Activated CD4-positive, alpha-beta memory T cell treated with anti-CD3 and anti-CD28 coated beads for 36 hours (primary cell): ENCODE measurements at regions of chr18 and their contacts with region 1.

Region 1: DNA sequence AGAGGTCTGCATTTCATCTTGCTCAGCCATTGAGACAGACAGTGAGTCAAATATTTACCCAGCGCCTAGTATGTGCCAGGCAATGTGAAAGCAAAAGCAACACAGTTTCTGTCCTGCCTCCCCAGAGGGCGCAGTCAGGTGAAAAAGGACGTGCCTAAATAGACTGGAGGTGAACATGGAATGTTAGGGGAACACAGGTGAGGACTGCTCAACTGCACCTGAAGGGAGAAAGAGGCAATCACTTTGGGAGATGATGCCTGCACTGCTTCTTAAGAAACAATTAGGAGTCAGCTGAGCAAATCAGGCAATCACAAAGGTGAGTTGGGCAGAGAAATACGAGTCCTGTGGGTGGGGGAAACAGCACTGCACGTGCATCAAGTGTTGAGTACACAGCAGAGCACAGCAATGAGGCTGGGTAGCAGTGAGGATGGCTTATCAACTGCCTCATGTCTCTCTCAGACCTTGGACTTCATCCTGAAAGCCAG is 218.3 kb upstream of the SMAD7 start:
- DNase-seq: peak; percentile 58
- H3K4me3 Mint-ChIP-seq: peak overlapping the region; percentile 36
- H3K27ac Mint-ChIP-seq: no peak overlapping the region
- H3K4me1 Mint-ChIP-seq: peaks cover 34% of the 10 kb centered on the region
- H3K27me3 Mint-ChIP-seq: no peaks in the 10 kb centered on the region

Region 2: GRCh38 chr18:48934723-48935432 is 234.2 kb before region 1 on chr18:
- CTCF ChIA-PET with region 1: no interaction called
- POLR2A ChIA-PET with region 1: no interaction called
- intact Hi-C with region 1: loop called (anchors 5 kb)
- DNase-seq: no peak
- H3K4me3 Mint-ChIP-seq: peak overlapping the region; percentile 40
- H3K27ac Mint-ChIP-seq: peak overlapping the region; percentile 76
- H3K4me1 Mint-ChIP-seq: peaks cover 89% of the 10 kb centered on the region
- H3K27me3 Mint-ChIP-seq: no peaks in the 10 kb centered on the region

Region 3: GRCh38 chr18:49072524-49072934 is 96.5 kb before region 1 on chr18:
- CTCF ChIA-PET with region 1: no interaction called
- POLR2A ChIA-PET with region 1: no interaction called
- intact Hi-C with region 1: loop called (anchors 10 kb)
- DNase-seq: no peak
- H3K4me3 Mint-ChIP-seq: no peak overlapping the region
- H3K27ac Mint-ChIP-seq: no peak overlapping the region
- H3K4me1 Mint-ChIP-seq: peaks cover 5% of the 10 kb centered on the region
- H3K27me3 Mint-ChIP-seq: no peaks in the 10 kb centered on the region

Region 4: GRCh38 chr18:49227441-49228165 is 58.5 kb after region 1 on chr18:
- CTCF ChIA-PET with region 1: no interaction called
- POLR2A ChIA-PET with region 1: no interaction called
- intact Hi-C with region 1: loop called (anchors 2 kb)
- DNase-seq: peak; percentile 63
- H3K4me3 Mint-ChIP-seq: no peak overlapping the region
- H3K27ac Mint-ChIP-seq: no peak overlapping the region
- H3K4me1 Mint-ChIP-seq: peaks cover 23% of the 10 kb centered on the region
- H3K27me3 Mint-ChIP-seq: no peaks in the 10 kb centered on the region

Region 5: DNA sequence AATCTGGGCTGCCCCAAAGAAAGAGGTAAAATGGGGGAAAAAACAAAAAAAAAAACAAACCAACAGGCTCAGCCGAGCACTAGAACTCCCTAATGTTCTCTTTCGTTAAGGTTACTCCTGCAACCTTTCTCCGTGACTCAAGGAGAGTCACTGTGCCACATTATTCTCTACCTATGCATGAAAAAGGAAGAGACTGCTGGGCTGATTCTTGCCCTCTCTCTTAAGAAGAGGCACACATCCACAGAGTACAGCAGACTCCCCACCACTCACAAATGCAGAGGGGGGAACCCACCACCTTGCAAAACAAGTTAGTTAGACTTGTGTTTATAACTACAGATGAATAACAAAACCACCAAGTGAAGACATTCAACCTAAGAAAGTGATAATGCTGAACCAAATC is 89.9 kb after region 1 on chr18:
- CTCF ChIA-PET with region 1: no interaction called
- POLR2A ChIA-PET with region 1: no interaction called
- intact Hi-C with region 1: no loop called
- DNase-seq: no peak
- H3K4me3 Mint-ChIP-seq: no peak overlapping the region
- H3K27ac Mint-ChIP-seq: no peak overlapping the region
- H3K4me1 Mint-ChIP-seq: no peaks in the 10 kb centered on the region
- H3K27me3 Mint-ChIP-seq: no peaks in the 10 kb centered on the region